ENCODE measurements at regions of chr11 and their contacts with region 1.

Region 1: DNA sequence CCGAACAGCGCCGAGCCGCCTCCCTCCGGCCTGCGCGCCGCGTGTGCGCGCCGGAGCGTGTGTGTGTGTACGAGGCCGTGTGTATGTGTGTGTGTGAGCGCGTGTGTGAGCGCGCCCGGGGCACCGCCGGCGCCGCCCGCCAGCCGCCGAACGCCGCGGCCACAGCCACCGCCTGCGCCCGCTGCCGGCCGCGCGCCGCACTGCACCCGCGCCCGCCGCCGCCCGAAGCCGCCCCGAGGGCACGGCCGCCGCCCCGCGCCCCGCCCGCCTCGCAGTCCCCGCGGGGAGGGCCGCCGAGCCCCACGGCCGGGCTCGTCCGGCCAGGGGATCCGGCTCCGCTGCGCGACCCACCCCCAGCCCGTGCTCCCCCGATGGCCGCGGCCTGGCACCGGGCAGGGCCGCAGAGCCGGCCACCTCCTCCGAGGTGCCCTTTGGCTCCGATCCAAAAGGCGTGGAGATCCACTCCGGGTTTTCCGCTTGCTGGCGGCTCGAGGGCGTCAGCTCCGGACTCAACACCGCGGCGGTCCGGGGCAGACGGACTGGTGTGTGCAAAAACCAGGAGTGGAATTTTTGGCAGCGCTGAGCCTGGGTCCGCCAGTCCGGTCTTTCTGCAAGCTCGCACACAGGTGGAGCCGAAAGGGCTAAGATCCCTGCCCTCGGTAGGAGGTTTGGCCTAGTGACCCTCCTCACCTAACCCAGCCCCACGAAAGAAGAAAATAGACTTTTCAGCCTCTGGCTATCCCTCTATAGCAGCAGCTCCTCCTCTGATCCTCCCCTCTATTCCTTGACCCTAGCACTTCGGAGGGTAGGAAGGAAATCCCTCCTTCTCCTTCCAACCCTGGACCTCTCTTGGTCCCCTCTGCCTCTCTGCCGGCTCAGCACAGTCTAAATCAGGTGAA is at the start of gene SYT7:
- DNase-seq: peak; percentile 99
- ATAC-seq: peak; percentile 81
- H3K4me3 ChIP-seq: peak within 1 kb of the TSS; percentile 84
- H3K27ac ChIP-seq: no peak within 1 kb of the TSS
- H3K4me1 ChIP-seq: peaks cover 16% of the 10 kb centered on the region
- H3K27me3 ChIP-seq: peaks cover 9% of the 10 kb centered on the region
- CTCF ChIP-seq: peak; percentile 15; the same call in 1 of the 2 replicates
- total RNA-seq, gene SYT7: 21.5 and 23.2 TPM in 2 replicates

Region 2: DNA sequence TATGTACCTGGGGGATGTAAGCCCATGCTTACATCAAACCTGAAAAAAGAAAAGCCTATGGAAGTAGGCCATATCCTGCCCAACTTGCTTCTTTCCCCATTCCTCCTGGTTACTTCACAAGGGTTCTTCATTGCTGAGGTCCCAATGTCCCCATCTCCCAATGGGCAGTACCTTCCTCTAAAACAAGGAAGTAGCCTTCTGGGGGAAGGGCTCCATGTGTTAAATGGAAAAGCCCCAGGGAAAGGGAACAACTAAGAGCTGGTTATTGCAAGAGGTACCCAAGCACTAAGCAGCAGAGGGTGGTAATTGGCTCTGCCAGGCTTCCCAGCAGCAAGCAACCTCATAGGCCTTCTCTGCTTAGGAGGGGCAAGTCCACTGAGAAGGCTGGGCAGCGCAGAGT is 177.6 kb before region 1 on chr11:
- CTCF ChIA-PET with region 1: interaction called, 10 read pairs
- POLR2A ChIA-PET with region 1: no interaction called
- intact Hi-C with region 1: no loop called
- DNase-seq: no peak
- ATAC-seq: no peak
- H3K4me3 ChIP-seq: no peak overlapping the region
- H3K27ac ChIP-seq: no peak overlapping the region
- H3K4me1 ChIP-seq: no peaks in the 10 kb centered on the region
- H3K27me3 ChIP-seq: no peaks in the 10 kb centered on the region
- CTCF ChIP-seq: no peak

Region 3: DNA sequence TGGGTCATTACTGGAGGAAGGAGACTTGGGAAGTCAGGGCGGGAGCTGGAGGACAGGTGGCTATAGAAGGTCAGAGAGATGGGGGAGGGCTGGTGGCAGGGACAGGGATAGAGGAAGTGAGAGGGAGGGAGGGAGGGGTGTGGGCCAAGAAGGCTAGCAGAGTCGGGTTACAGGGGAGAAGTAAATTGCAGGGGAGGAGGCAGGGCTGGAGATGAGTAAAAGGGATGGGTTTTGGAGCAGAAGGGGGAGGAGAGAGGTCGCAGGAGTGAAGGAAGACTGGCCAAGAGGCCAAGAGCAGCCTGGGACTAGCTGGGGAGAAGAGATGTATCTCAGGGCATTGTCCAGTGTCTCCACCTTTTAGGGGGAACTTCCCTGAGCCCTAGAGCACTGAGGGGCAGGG is 39.7 kb before region 1 on chr11:
- CTCF ChIA-PET with region 1: no interaction called
- POLR2A ChIA-PET with region 1: no interaction called
- intact Hi-C with region 1: loop called (anchors 5 kb)
- DNase-seq: peak; percentile 78
- ATAC-seq: peak; percentile 79
- H3K4me3 ChIP-seq: peak overlapping the region; percentile 21; the same call in 1 of the 2 replicates
- H3K27ac ChIP-seq: no peak overlapping the region
- H3K4me1 ChIP-seq: peaks cover 41% of the 10 kb centered on the region
- H3K27me3 ChIP-seq: no peaks in the 10 kb centered on the region
- CTCF ChIP-seq: no peak

Region 4: GRCh38 chr11:61627567-61628445 is 46.5 kb after region 1 on chr11:
- CTCF ChIA-PET with region 1: no interaction called
- POLR2A ChIA-PET with region 1: no interaction called
- intact Hi-C with region 1: loop called (anchors 2 kb)
- DNase-seq: peak; percentile 89
- ATAC-seq: peak; percentile 78
- H3K4me3 ChIP-seq: no peak overlapping the region
- H3K27ac ChIP-seq: peak overlapping the region; percentile 85
- H3K4me1 ChIP-seq: peaks cover 23% of the 10 kb centered on the region
- H3K27me3 ChIP-seq: no peaks in the 10 kb centered on the region
- CTCF ChIP-seq: peak; percentile 98

Region 5: DNA sequence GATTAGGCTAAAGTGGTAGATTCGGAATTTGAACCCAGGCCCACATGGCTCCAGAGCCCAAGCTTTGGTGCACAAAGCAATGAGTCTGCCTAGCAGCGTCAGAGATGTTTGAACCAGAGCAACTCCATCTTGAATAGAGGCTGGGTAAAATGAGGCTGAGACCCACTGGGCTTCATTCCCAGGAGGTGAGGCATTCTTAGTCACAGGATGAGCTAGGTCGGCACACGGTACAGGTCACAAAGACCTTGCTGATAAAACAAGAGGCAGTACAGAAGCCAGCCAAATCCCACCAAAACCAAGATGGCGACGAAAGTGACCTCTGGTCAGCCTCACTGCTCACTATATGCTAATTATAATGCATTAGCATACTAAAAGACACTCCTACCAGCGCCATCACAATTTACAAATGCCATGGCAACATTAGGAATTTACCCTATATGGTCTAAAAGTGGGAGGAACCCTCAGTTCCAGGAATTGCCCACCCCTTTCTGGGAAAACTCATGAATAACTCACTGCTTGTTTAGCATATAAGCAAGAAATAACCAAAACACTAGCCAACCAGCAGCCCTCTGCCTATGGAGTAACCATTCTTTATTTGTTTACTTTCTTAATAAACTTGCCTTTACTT is 58.7 kb after region 1 on chr11:
- CTCF ChIA-PET with region 1: interaction called, 13 read pairs
- POLR2A ChIA-PET with region 1: no interaction called
- intact Hi-C with region 1: no loop called
- DNase-seq: peak; percentile 72
- ATAC-seq: peak; percentile 16; the same call in 1 of the 2 replicates
- H3K4me3 ChIP-seq: no peak overlapping the region
- H3K27ac ChIP-seq: no peak overlapping the region
- H3K4me1 ChIP-seq: peaks cover 18% of the 10 kb centered on the region
- H3K27me3 ChIP-seq: no peaks in the 10 kb centered on the region
- CTCF ChIP-seq: no peak

Region 6: GRCh38 chr11:61733120-61733978 is 152.1 kb after region 1 on chr11:
- CTCF ChIA-PET with region 1: interaction called, 4 read pairs
- POLR2A ChIA-PET with region 1: no interaction called
- intact Hi-C with region 1: loop called (anchors 2 kb)
- DNase-seq: peak; percentile 96
- ATAC-seq: peak; percentile 42
- H3K4me3 ChIP-seq: no peak overlapping the region
- H3K27ac ChIP-seq: peak overlapping the region; percentile 13
- H3K4me1 ChIP-seq: peaks cover 48% of the 10 kb centered on the region
- H3K27me3 ChIP-seq: no peaks in the 10 kb centered on the region
- CTCF ChIP-seq: peak; percentile 99

Region 7: GRCh38 chr11:61803889-61804647 is 222.8 kb after region 1 on chr11:
- CTCF ChIA-PET with region 1: no interaction called
- POLR2A ChIA-PET with region 1: no interaction called
- intact Hi-C with region 1: no loop called
- DNase-seq: no peak
- ATAC-seq: no peak
- H3K4me3 ChIP-seq: no peak overlapping the region
- H3K27ac ChIP-seq: no peak overlapping the region
- H3K4me1 ChIP-seq: peaks cover 10% of the 10 kb centered on the region
- H3K27me3 ChIP-seq: no peaks in the 10 kb centered on the region
- CTCF ChIP-seq: no peak

Measured in PC-3 (cell line).